ENCODE measurements at regions of chr12 and their contacts with region 1.

Region 1: DNA sequence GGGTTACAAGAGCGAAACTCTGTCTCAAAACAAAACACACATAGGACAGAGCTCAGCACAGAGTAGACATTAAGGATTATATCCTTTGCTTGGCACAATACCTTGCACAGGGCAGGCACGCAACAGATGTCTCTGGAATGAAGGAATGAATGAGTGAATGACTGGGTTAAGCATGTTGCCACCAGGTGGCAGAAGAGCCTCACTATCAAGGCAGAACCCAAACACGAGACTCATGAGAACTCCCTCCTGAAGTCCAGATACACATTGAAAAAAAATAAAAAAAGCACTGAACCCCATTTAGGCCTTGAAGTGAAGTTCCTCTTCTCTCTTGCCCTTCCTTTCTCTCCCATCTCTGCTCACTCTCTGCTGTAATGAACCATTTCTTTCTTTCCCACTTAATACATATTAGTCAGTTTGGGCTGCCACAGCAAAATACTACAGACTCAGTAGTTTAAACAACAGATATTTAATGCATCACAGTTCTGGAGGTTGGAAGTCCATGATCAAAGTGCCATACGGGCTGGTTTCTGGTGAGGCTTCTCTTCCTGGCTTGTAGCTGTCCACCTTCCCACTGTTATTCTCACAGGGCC is 26.6 kb upstream of the LTA4H start:
- DNase-seq: peak; percentile 69
- H3K4me3 ChIP-seq: peak overlapping the region in 1 of 2 experiments; percentile 36; a peak in 1 of 4 replicates
- H3K27ac ChIP-seq: no peak overlapping the region
- H3K4me1 ChIP-seq: 0 out of 4 replicates have a peak, but pooled peaks cover 0 to 4% of the 10 kb centered on the region in 2 experiments
- H3K27me3 ChIP-seq: no peaks in the 10 kb centered on the region
- CTCF ChIP-seq: peak; percentile 83
- EP300 ChIP-seq: no peak
- RAD21 ChIP-seq: peak; percentile 96

Region 2: DNA sequence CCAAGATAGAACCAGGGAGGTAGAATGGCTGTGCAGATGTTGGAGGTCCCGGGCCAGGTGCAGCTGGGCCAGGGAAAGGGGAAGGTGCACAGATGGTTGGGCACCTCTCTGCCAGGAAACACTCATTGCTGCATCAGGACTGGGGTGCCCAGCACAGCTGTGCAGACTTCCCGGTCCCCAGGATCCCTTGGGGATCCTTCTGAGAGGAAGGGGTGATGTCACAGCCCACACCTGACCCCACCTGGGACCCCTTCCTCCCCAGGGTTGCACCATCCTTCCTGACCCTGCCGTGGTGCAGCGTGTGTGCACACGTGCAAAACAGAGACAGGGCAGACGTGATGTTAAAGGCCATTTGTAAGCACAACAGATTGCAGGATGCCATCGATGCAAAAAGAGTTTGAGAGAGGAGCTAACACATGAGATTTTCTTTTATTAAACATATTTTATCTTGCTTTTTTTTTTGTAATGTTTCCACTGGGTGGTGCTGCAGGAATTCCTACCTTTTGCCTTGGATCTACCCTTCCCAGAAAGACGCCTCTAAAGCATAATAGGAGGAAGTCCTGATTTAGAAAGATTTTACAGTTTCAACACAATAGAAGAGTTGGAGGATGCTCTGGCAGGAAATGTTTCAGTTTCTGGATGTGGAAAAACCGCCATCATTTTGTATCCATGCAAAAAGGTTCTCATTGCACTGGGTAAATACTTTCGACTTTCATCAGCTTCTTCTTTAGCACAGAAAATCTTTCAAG is 147.0 kb after region 1 on chr12:
- CTCF ChIA-PET with region 1: interaction called, 84 read pairs
- POLR2A ChIA-PET with region 1: no interaction called
- DNase-seq: no peak
- H3K4me3 ChIP-seq: no peak overlapping the region
- H3K27ac ChIP-seq: peak overlapping the region in 1 of 2 experiments; percentile 50; a peak in 3 of 4 replicates
- H3K4me1 ChIP-seq: peaks cover 3 to 30% of the 10 kb centered on the region in 2 experiments; a peak in 3 of 4 replicates
- H3K27me3 ChIP-seq: no peaks in the 10 kb centered on the region
- CTCF ChIP-seq: peak; percentile 36
- EP300 ChIP-seq: no peak
- RAD21 ChIP-seq: peak; percentile 52

Measured in SK-N-SH (cell line).